Astrocyte of the cerebellum (primary cell): ENCODE measurements at regions of chr6 and their contacts with region 1.

Region 1: DNA sequence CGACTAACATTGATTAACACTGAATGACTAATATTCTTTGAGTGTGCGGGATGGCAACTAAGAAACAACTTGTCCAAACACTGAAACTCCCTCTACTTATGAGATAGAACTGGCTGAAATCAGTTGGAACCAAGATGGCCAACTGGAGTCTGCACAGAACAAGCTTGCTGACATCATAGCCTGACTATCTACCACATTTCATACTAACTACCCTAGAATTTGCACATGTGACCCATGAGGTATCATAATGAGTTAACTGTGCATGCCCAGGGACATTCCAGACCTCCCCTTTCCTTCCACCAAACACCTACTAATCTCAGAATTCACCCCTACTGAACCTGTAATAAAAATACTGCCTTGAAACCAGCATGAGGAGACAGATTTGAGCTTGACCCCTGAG is 43.2 kb downstream of the PHIP start:
- DNase-seq: no peak
- H3K4me3 ChIP-seq: no peak overlapping the region
- CTCF ChIP-seq: no peak

Region 2: GRCh38 chr6:78850621-78851020 is 184.2 kb before region 1 on chr6:
- in situ Hi-C with region 1: no loop called
- DNase-seq: no peak
- H3K4me3 ChIP-seq: no peak overlapping the region
- CTCF ChIP-seq: no peak

Region 3: DNA sequence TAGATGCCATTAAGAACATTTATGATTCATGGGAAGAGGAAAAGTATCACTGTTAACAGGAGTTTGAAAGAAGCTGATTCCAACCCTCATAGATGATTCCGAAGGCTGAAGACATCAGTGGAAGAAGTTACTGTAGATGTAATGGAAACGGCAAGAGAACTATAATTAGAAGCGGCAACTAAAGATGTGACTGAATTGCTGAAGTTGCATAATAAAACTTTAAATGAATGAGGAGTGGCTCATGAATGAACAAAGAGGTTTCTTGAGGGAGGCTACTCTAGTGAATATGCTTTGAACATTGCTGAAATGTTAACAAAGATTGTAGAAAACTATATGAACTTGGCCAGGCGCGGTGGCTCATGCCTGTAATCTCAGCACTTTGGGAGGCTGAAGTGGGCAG is 40.9 kb before region 1 on chr6:
- in situ Hi-C with region 1: loop called (anchors 5 kb)
- DNase-seq: no peak
- H3K4me3 ChIP-seq: no peak overlapping the region
- CTCF ChIP-seq: no peak